ENCODE measurements at regions of chr6 and their contacts with region 1.

Region 1: GRCh38 chr6:25369433-25370181 is 90.4 kb downstream of the CARMIL1 start:
- DNase-seq: peak; percentile 73
- H3K4me3 Mint-ChIP-seq: peak overlapping the region; percentile 76
- H3K27ac Mint-ChIP-seq: peak overlapping the region; percentile 88
- H3K4me1 Mint-ChIP-seq: peaks cover 65% of the 10 kb centered on the region
- H3K27me3 Mint-ChIP-seq: no peaks in the 10 kb centered on the region

Region 2: DNA sequence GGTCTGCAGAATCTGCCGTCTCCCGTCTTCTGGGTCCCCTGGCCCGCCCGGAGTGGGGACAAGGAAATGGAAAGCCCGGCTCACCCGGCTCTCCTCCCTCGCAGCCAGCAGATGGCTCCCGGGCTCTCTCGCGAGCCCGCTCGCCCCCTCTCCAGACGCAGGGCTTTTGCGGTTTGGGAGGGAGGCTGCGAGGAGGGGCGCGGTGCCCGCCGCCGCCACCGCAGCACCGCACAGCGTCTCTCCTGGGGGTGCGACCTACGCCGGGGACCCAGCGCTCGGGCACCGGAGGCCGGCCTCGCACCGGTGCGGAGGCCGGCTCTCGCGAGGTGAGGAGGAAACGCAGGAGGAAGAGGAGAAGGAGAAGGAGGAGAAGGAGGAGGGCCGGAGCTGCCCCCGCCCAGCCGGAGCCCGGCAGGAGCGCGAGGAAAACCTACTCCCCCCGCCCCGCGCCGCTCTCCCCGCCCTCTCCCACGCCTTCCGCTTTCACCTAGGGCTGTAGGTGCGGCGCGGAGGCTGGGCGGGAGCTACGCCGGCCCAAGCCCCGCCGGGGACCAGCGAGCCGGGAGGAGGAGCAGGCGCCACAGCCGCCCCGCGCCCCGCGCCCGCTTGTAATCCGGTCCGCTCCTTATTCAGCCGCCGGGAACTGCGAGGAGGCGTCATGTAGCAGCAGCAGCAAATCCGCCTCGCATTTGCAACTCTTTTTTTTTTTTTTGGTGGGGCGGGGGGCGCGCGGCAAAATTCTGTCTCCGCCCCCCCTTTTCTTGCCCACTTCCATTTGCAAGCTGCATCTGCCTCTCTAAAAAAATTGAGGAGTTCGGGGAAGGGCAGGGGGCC is 90.5 kb before region 1 on chr6 and contains the start of gene CARMIL1:
- intact Hi-C with region 1: loop called (anchors 2 kb)
- DNase-seq: peak; percentile 92
- H3K4me3 Mint-ChIP-seq: peak within 1 kb of the TSS; percentile 86
- H3K27ac Mint-ChIP-seq: peak within 1 kb of the TSS; percentile 75
- H3K4me1 Mint-ChIP-seq: peaks cover 20% of the 10 kb centered on the region
- H3K27me3 Mint-ChIP-seq: peaks cover 22% of the 10 kb centered on the region
- total RNA-seq, gene CARMIL1: 1.4 and 1.6 TPM in 2 replicates

Region 3: GRCh38 chr6:25312703-25313501 is 56.7 kb before region 1 on chr6:
- intact Hi-C with region 1: loop called (anchors 1 kb)
- DNase-seq: no peak
- H3K4me3 Mint-ChIP-seq: no peak overlapping the region
- H3K27ac Mint-ChIP-seq: no peak overlapping the region
- H3K4me1 Mint-ChIP-seq: peaks cover 3% of the 10 kb centered on the region
- H3K27me3 Mint-ChIP-seq: peaks cover 2% of the 10 kb centered on the region

Region 4: DNA sequence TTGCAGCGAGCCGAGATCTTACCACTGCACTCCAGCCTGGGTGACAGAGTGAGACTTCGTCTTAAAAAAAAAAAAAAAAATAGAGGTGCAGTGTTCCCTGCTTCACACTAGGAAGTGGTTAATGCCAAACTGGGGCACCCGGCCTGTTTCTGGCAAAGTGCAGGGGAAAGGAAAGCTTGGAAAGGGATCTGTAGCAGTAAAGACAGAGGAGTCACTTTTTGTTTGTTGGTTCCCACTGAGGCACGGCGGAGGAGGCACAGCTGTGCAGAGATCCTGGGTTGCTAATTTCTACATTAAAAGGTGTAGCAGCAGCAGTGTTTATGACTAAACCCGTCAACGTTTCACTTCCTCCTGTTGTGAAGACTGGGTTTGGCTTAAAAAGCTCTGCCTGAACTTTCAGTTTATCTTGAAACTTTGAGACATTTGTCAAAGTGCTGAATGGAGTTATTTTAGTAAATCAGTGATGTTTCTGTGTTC is 35.1 kb after region 1 on chr6:
- intact Hi-C with region 1: loop called (anchors 1 kb)
- DNase-seq: peak; percentile 79
- H3K4me3 Mint-ChIP-seq: no peak overlapping the region
- H3K27ac Mint-ChIP-seq: no peak overlapping the region
- H3K4me1 Mint-ChIP-seq: peaks cover 6% of the 10 kb centered on the region
- H3K27me3 Mint-ChIP-seq: no peaks in the 10 kb centered on the region

Region 5: GRCh38 chr6:25962149-25963127 is 592.8 kb after region 1 on chr6 and contains the start of gene TRIM38:
- intact Hi-C with region 1: loop called (anchors 5 kb)
- DNase-seq: peak; percentile 94
- H3K4me3 Mint-ChIP-seq: peak within 1 kb of the TSS; percentile 88
- H3K27ac Mint-ChIP-seq: peak within 1 kb of the TSS; percentile 96
- H3K4me1 Mint-ChIP-seq: peaks cover 75% of the 10 kb centered on the region
- H3K27me3 Mint-ChIP-seq: no peaks in the 10 kb centered on the region
- total RNA-seq, gene TRIM38: 23.0 and 24.5 TPM in 2 replicates

Measured in activated CD4-positive, alpha-beta T cell treated with anti-CD3 and anti-CD28 coated beads, Interleukin-2, amount 10 ng/mL, durations not matched to agents 24 days and 14 days (primary cell).